ENCODE measurements at regions of chr20 and their contacts with region 1.

Region 1: DNA sequence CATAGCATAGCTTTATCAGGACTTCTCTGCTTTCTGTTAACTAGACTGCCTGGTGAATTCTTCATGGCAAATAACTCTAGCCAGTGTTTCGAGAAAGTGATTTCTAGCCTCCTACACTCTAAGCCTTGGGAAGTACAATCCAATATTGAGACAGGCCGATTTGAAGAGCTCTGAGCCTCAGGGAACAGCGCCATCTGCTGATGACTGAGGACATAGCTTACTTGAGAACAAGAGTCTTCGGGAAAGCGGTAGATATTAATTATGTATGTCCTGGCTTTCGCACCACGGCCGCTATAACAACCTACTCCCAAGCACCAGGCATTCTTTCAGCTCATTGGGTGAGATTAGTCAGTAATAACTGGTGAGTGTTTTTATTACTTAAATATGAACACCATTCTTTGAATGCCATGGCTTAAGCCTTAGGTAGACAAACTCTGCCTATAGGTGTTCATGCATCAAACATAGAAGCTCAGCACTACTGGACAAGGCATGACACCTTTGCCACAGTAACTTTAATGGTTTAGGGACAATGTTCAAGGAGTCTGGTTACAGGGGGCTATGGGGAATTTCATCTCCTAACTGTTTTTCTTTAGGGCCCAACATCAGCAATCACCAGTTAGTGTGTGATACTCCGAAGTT is 518.6 kb downstream of the BMP2 start:
- DNase-seq: peak in 1 of 2 donors; percentile 86
- H3K4me3 ChIP-seq: no peak overlapping the region
- H3K27ac ChIP-seq: no peak overlapping the region
- H3K4me1 ChIP-seq: no peaks in the 10 kb centered on the region
- H3K27me3 ChIP-seq: no peaks in the 10 kb centered on the region
- CTCF ChIP-seq: peak; percentile 12 to 78 (median 73)

Region 2: DNA sequence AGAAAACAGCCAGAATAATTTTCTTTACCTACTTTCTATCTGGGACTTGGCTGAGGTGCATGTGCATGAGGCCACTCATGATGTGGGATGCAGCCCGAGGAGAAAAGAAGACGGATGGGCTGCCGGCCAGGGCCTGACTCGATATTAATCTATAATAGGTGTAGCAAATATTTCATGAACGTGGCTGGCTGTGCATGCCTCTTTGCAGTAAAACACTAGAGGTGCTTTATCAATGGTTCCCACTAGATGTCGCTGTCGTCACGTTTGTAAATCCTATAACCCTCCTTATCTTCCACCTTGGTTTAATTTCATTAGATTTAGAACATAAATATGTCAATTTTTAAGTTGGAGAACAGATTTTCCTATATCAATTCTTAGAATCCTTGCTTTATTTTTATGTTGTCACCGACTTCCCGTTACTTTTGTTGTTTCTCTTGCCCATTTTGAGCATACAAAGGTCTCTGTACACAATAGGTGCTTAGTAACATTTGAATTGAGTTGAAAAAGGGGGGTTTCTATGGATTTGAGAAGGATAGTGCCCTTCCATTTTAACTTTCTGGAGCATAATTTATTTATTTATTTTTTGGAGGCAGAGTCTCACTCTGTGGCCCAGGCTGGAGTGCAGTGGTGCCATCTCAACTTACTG is 1143.6 kb before region 1 on chr20:
- intact Hi-C with region 1: loop called (anchors 1 kb)
- DNase-seq: no peak
- H3K4me3 ChIP-seq: no peak overlapping the region
- H3K27ac ChIP-seq: no peak overlapping the region
- H3K4me1 ChIP-seq: no peaks in the 10 kb centered on the region
- H3K27me3 ChIP-seq: no peaks in the 10 kb centered on the region
- CTCF ChIP-seq: peak in 2 of 3 experiments; percentile 83 to 87

Region 3: DNA sequence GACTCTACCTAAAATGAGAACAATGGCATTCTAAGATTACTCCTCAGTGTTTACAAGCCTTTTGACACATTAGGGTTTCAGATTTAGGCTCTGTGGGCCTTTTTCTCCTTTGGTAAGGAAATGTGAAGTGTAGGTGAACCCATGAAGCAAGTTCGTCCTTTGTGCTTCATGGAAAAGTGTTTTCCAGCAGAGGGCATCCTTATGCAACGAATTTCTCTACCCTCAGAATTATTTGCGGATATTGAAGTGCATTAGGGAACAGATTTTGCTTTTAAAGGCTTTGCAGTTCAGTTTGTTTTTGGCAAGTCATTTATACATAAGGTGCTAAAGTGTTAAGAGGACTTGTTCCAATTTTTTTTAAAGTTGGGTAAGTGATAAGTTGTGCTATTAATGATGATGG is 1107.5 kb before region 1 on chr20:
- intact Hi-C with region 1: loop called (anchors 2 kb)
- DNase-seq: no peak
- H3K4me3 ChIP-seq: no peak overlapping the region
- H3K27ac ChIP-seq: no peak overlapping the region
- H3K4me1 ChIP-seq: no peaks in the 10 kb centered on the region
- H3K27me3 ChIP-seq: no peaks in the 10 kb centered on the region
- CTCF ChIP-seq: peak in 2 of 3 experiments; percentile 28 to 52

Region 4: GRCh38 chr20:6302041-6302440 is 984.0 kb before region 1 on chr20:
- intact Hi-C with region 1: no loop called
- DNase-seq: no peak
- H3K4me3 ChIP-seq: no peak overlapping the region
- H3K27ac ChIP-seq: no peak overlapping the region
- H3K4me1 ChIP-seq: no peaks in the 10 kb centered on the region
- H3K27me3 ChIP-seq: no peaks in the 10 kb centered on the region
- CTCF ChIP-seq: no peak

Region 5: DNA sequence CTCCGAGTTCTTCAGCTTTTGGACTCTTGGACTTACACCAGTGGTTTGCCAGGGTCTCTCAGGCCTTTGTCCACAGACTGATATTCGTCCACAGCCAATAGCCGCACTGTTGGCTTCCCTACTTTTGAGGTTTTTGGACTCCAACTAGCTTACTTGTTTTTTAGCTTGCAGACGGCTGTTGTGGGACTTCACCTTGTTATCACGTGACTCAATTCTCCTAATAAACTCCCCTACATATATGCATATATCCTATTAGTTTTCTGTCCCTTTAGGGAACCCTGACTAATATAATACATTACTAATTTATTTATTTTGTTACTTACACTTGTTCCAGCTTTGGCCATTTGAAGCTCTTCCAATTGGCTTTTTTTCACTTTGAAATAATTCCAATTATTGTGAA is 207.2 kb before region 1 on chr20:
- intact Hi-C with region 1: no loop called
- DNase-seq: no peak
- H3K4me3 ChIP-seq: no peak overlapping the region
- H3K27ac ChIP-seq: no peak overlapping the region
- H3K4me1 ChIP-seq: no peaks in the 10 kb centered on the region
- H3K27me3 ChIP-seq: no peaks in the 10 kb centered on the region
- CTCF ChIP-seq: no peak

Region 6: DNA sequence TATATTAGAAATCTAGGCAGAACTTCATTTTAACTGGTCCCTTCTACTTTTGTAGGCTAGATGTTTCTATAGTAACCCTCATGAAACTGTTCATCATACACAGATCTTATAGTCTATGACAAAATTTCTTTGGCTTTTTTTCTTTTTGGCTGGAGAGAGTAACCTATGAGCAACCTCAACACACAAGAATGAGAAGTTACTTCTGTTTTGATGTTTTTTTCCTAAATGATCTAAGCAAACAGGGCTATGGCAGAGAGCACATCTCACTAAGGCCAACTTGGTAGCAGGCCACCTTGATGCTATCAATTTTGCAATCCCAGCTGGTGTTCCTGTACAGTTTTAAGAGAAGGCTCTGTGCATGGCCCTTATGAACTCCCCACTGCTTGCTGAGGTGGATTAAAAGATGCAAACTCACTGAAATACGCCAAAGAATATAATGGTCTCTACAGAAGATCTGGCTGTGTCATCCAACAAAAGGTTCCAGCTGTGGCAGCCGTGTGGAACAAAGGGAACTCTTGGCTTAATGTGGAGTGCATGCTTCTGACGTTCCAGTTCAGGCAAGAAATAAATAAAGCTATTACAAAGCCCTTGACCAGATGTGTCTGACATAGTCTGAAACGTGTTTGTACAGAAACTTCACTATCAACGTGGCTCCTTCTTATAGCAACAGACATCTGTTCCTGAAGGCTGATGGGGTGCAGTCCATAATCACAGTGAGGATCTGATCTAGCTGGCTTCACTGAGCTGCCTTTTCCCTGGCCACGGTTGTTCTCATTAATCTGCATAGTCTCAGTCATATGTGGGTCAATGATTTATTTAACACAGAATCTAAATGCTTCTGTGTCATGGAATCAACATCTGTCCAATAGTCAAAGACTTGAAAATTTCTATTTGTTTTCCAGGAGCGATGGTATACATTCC is 37.5 kb before region 1 on chr20:
- intact Hi-C with region 1: no loop called
- DNase-seq: no peak
- H3K4me3 ChIP-seq: no peak overlapping the region
- H3K27ac ChIP-seq: no peak overlapping the region
- H3K4me1 ChIP-seq: no peaks in the 10 kb centered on the region
- H3K27me3 ChIP-seq: no peaks in the 10 kb centered on the region
- CTCF ChIP-seq: no peak

Measured in ascending aorta (tissue), 2 donors.